ENCODE measurements at regions of chr6 and their contacts with region 1.

Region 1: GRCh38 chr6:106223300-106223930 is 102.1 kb downstream of the ATG5 start:
- DNase-seq: peak; percentile 44 to 88
- ATAC-seq: peak; percentile 90 to 91 (median 91)
- H3K4me3 ChIP-seq: no peak overlapping the region
- H3K4me3 Mint-ChIP-seq: no peak overlapping the region
- H3K27ac ChIP-seq: no peak overlapping the region
- H3K27ac Mint-ChIP-seq: peak overlapping the region in 1 of 2 donors; percentile 67
- H3K4me1 ChIP-seq: no peaks in the 10 kb centered on the region
- H3K4me1 Mint-ChIP-seq: peaks cover 17 to 22% of the 10 kb centered on the region in 2 donors
- H3K27me3 ChIP-seq: no peaks in the 10 kb centered on the region
- H3K27me3 Mint-ChIP-seq: no peaks in the 10 kb centered on the region
- CTCF ChIP-seq: peak; percentile 83

Region 2: DNA sequence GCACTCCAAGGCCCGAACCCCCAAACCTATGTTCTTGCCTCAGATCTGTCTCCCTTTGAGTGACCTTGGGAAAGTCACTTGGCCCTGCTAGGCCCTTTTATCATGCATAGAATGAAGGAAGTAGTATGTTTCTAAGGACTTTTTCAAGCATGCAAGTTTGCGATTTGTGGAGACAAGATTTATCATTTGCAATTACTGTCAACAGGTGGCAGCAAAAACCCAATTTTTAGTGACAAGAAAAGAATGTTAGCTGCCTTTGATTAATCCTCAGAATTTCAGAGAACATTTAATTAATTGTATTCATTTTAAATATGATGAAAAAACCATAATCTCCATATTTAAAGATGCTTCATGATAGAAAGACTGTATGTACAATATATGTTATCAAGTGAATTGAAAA is 792.2 kb before region 1 on chr6:
- intact Hi-C with region 1: loop called (anchors 2 kb)
- DNase-seq: peak in 1 of 2 donors; percentile 76
- ATAC-seq: no peak
- H3K4me3 ChIP-seq: no peak overlapping the region
- H3K4me3 Mint-ChIP-seq: no peak overlapping the region
- H3K27ac ChIP-seq: no peak overlapping the region
- H3K27ac Mint-ChIP-seq: no peak overlapping the region
- H3K4me1 ChIP-seq: no peaks in the 10 kb centered on the region
- H3K4me1 Mint-ChIP-seq: no peaks in the 10 kb centered on the region
- H3K27me3 ChIP-seq: no peaks in the 10 kb centered on the region
- H3K27me3 Mint-ChIP-seq: no peaks in the 10 kb centered on the region
- CTCF ChIP-seq: peak; percentile 68

Region 3: GRCh38 chr6:105733565-105734162 is 489.8 kb before region 1 on chr6:
- intact Hi-C with region 1: loop called (anchors 1 kb)
- DNase-seq: peak in 1 of 2 donors; percentile 71
- ATAC-seq: no peak
- H3K4me3 ChIP-seq: no peak overlapping the region
- H3K4me3 Mint-ChIP-seq: no peak overlapping the region
- H3K27ac ChIP-seq: no peak overlapping the region
- H3K27ac Mint-ChIP-seq: no peak overlapping the region
- H3K4me1 ChIP-seq: no peaks in the 10 kb centered on the region
- H3K4me1 Mint-ChIP-seq: no peaks in the 10 kb centered on the region
- H3K27me3 ChIP-seq: no peaks in the 10 kb centered on the region
- H3K27me3 Mint-ChIP-seq: no peaks in the 10 kb centered on the region
- CTCF ChIP-seq: peak; percentile 68

Region 4: DNA sequence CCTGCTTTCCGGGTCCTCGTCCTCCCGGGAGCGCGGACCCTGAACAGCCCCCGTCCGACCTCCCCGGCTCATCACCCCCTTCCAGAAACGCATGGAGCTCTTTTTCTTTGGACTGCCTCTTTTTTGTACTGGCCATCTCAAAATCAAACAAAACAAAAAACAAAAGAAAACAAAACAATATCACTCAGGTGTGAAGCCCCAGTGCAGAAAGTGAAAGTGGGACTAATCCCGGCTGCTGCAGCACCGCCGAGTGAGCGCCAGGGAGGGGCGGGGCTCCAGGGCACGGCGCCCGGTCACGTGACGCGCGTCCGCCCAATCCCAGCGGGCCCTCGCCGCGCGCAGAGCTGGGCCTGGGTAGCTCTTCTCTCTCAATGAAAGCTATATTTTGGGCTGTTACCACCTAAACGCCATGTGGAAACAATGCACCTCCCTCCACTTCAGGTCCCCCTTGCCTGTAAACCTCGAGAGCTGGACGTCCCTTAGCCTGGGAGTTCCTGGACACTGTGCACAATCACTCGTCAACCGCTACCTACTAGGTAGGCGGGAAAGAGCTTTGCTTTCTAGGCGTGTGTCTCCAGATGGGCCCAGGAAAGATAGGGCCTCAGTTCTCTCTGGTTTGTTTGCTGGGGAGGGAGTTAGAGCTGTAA is 231.0 kb before region 1 on chr6:
- intact Hi-C with region 1: loop called (anchors 5 kb)
- DNase-seq: peak; percentile 83 to 95
- ATAC-seq: peak; percentile 83 to 91 (median 90)
- H3K4me3 ChIP-seq: peak overlapping the region; percentile 88
- H3K4me3 Mint-ChIP-seq: peak overlapping the region; percentile 99
- H3K27ac ChIP-seq: peak overlapping the region; percentile 67
- H3K27ac Mint-ChIP-seq: peak overlapping the region; percentile 86 to 89
- H3K4me1 ChIP-seq: peaks cover 35% of the 10 kb centered on the region
- H3K4me1 Mint-ChIP-seq: peaks cover 33% of the 10 kb centered on the region in 2 donors
- H3K27me3 ChIP-seq: peaks cover 40% of the 10 kb centered on the region
- H3K27me3 Mint-ChIP-seq: peaks cover 53 to 66% of the 10 kb centered on the region in 2 donors
- CTCF ChIP-seq: no peak

Region 5: GRCh38 chr6:106141441-106142237 is 81.8 kb before region 1 on chr6:
- intact Hi-C with region 1: loop called (anchors 1 kb)
- DNase-seq: peak; percentile 38 to 56
- ATAC-seq: peak; percentile 71 to 84 (median 78)
- H3K4me3 ChIP-seq: no peak overlapping the region
- H3K4me3 Mint-ChIP-seq: peak overlapping the region; percentile 88
- H3K27ac ChIP-seq: peak overlapping the region; percentile 77
- H3K27ac Mint-ChIP-seq: peak overlapping the region; percentile 92 to 96
- H3K4me1 ChIP-seq: peaks cover 55% of the 10 kb centered on the region
- H3K4me1 Mint-ChIP-seq: peaks cover 59 to 72% of the 10 kb centered on the region in 2 donors
- H3K27me3 ChIP-seq: no peaks in the 10 kb centered on the region
- H3K27me3 Mint-ChIP-seq: no peaks in the 10 kb centered on the region
- CTCF ChIP-seq: no peak